CD4-positive, alpha-beta T cell (primary cell): ENCODE measurements at regions of chr3 and their contacts with region 1.

Region 1: DNA sequence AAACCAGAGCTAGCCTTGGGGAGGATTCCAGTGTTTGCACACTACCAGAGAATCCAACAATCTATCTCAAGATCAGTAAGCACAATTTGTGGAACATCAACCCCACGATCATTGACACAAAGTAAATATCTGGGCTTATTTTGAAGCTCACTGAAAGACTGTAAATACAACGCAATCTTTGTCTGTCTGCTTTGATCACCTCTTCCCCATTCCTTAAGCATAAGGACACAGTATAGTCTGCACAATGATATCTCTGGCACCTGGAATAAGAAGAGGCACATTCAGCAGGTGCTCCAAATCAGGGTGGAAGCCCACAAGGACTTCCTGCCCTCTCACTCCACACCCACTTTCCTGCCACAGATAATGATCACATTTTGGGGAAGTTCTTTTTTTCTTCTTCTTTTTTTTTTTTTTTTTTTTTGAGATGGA is 26.0 kb downstream of the BTLA start:
- DNase-seq: peak in 4 of 14 experiments; percentile 14 to 69 (median 62)
- ATAC-seq: peak; percentile 78
- H3K4me3 ChIP-seq: no peak overlapping the region
- H3K4me3 Mint-ChIP-seq: peak overlapping the region; percentile 78
- H3K27ac ChIP-seq: peak overlapping the region in 1 of 2 donors; percentile 18
- H3K27ac Mint-ChIP-seq: peak overlapping the region; percentile 83
- H3K4me1 ChIP-seq: peaks cover 46% of the 10 kb centered on the region
- H3K4me1 Mint-ChIP-seq: peaks cover 70% of the 10 kb centered on the region
- H3K27me3 ChIP-seq: no peaks in the 10 kb centered on the region
- H3K27me3 Mint-ChIP-seq: no peaks in the 10 kb centered on the region
- CTCF ChIP-seq: no peak

Region 2: DNA sequence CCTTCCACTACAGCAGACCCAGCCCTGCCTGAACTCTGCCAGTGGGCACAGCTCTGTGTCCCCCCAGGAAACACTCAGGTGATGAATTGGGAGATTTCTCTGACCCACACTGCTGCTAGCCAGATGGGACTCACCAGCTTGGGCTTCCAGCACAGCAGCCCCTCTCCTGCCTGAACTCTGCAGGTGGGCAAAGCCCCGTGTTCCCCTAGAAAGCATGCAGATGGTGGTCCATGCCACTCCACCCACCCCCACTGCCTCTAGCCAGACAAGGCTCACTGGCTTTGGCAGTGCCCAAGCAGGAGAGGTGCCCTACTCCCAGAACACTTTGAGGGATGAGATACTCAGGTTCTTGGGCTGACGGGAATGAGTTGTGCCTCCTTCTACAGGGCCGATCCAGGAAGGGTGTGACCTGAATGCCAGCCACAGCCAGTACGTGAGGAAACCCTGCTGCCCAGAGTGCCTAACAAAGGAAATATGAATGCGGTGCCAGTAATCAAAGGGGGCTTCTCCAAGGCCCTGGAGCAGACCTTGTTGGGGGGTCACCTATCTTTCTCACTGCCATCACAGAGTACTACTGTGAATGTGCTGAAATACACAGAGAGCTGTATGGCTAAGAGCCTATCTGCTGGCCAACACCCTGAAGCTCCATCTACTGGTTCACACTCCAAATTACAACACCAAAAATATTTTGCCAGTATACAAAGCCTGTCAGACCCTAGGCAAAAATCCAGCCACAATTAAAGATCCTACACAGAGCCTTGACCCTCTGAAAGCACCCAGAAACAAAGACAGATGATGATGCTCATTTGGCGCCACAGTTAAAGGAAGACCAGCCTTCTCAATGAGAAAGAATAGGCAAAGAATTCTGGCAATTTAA is 35.8 kb before region 1 on chr3:
- CTCF ChIA-PET with region 1: no interaction called
- POLR2A ChIA-PET with region 1: interaction called, 3 read pairs
- intact Hi-C with region 1: loop called in 1 of 2 experiments (anchors 2 kb)
- DNase-seq: peak in 3 of 14 experiments; percentile 49 to 56 (median 55)
- ATAC-seq: peak; percentile 72
- H3K4me3 ChIP-seq: no peak overlapping the region
- H3K4me3 Mint-ChIP-seq: peak overlapping the region; percentile 50
- H3K27ac ChIP-seq: no peak overlapping the region
- H3K27ac Mint-ChIP-seq: no peak overlapping the region
- H3K4me1 ChIP-seq: peaks cover 10% of the 10 kb centered on the region
- H3K4me1 Mint-ChIP-seq: peaks cover 17% of the 10 kb centered on the region
- H3K27me3 ChIP-seq: no peaks in the 10 kb centered on the region
- H3K27me3 Mint-ChIP-seq: no peaks in the 10 kb centered on the region
- CTCF ChIP-seq: peak; percentile 42